ENCODE measurements at regions of chr19 and their contacts with region 1.

Region 1: GRCh38 chr19:56080669-56081401 is 40.3 kb downstream of the ZNF787 start:
- DNase-seq: peak; percentile 85
- H3K4me3 ChIP-seq: peak overlapping the region in 3 of 4 donors; percentile 8 to 53 (median 33)
- H3K27ac ChIP-seq: no peak overlapping the region
- H3K4me1 ChIP-seq: peaks cover 0 to 12% (median 8%) of the 10 kb centered on the region in 4 donors
- H3K27me3 ChIP-seq: peaks cover 8% of the 10 kb centered on the region
- CTCF ChIP-seq: peak; percentile 27 to 63 (median 53)
- EP300 ChIP-seq: no peak
- POLR2A ChIP-seq: no peak

Region 2: GRCh38 chr19:55703790-55704215 is 377.0 kb before region 1 on chr19:
- in situ Hi-C with region 1: no loop called
- intact Hi-C with region 1: no loop called
- DNase-seq: peak; percentile 69
- H3K4me3 ChIP-seq: no peak overlapping the region
- H3K27ac ChIP-seq: no peak overlapping the region
- H3K4me1 ChIP-seq: peaks cover 0 to 22% (median 5%) of the 10 kb centered on the region in 4 donors
- H3K27me3 ChIP-seq: no peaks in the 10 kb centered on the region
- CTCF ChIP-seq: peak; percentile 74 to 84 (median 75)
- EP300 ChIP-seq: no peak
- POLR2A ChIP-seq: no peak

Region 3: GRCh38 chr19:55958356-55958755 is 122.5 kb before region 1 on chr19:
- in situ Hi-C with region 1: no loop called
- intact Hi-C with region 1: no loop called
- DNase-seq: no peak
- H3K4me3 ChIP-seq: no peak overlapping the region
- H3K27ac ChIP-seq: no peak overlapping the region
- H3K4me1 ChIP-seq: no peaks in the 10 kb centered on the region
- H3K27me3 ChIP-seq: no peaks in the 10 kb centered on the region
- CTCF ChIP-seq: no peak
- EP300 ChIP-seq: no peak
- POLR2A ChIP-seq: no peak

Region 4: GRCh38 chr19:56170261-56170660 is 89.4 kb after region 1 on chr19:
- in situ Hi-C with region 1: loop called (anchors 5 to 10 kb)
- intact Hi-C with region 1: no loop called
- DNase-seq: no peak
- H3K4me3 ChIP-seq: no peak overlapping the region
- H3K27ac ChIP-seq: no peak overlapping the region
- H3K4me1 ChIP-seq: peaks cover 0 to 4% (median 2%) of the 10 kb centered on the region in 4 donors
- H3K27me3 ChIP-seq: peaks cover 21% of the 10 kb centered on the region
- CTCF ChIP-seq: no peak
- EP300 ChIP-seq: no peak
- POLR2A ChIP-seq: no peak

Region 5: GRCh38 chr19:56314562-56315077 is 233.8 kb after region 1 on chr19 and contains the start of gene ZSCAN5A:
- in situ Hi-C with region 1: loop called in 1 of 4 experiments (anchors 25 kb)
- intact Hi-C with region 1: no loop called
- DNase-seq: peak; percentile 98
- H3K4me3 ChIP-seq: peak within 1 kb of the TSS; percentile 51 to 95 (median 61)
- H3K27ac ChIP-seq: peak within 1 kb of the TSS; percentile 93 to 97 (median 95)
- H3K4me1 ChIP-seq: peaks cover 0 to 28% (median 9%) of the 10 kb centered on the region in 4 donors
- H3K27me3 ChIP-seq: no peaks in the 10 kb centered on the region
- CTCF ChIP-seq: peak in 1 of 5 experiments; percentile 10
- EP300 ChIP-seq: peak; percentile 34
- POLR2A ChIP-seq: peak; percentile 43
- total RNA-seq, gene ZSCAN5A: 8.2 to 15.2 (median 12.6) TPM

Measured in transverse colon (tissue), 4 donors.